ENCODE measurements at regions of chr9 and their contacts with region 1.

Region 1: GRCh38 chr9:121822093-121823085 is 171.0 kb downstream of the DAB2IP start:
- DNase-seq: no peak
- ATAC-seq: no peak
- H3K4me3 ChIP-seq: no peak overlapping the region
- H3K27ac ChIP-seq: no peak overlapping the region
- H3K4me1 ChIP-seq: no peaks in the 10 kb centered on the region
- CTCF ChIP-seq: no peak
- EP300 ChIP-seq: no peak
- POLR2A ChIP-seq: no peak
- RAD21 ChIP-seq: no peak

Region 2: DNA sequence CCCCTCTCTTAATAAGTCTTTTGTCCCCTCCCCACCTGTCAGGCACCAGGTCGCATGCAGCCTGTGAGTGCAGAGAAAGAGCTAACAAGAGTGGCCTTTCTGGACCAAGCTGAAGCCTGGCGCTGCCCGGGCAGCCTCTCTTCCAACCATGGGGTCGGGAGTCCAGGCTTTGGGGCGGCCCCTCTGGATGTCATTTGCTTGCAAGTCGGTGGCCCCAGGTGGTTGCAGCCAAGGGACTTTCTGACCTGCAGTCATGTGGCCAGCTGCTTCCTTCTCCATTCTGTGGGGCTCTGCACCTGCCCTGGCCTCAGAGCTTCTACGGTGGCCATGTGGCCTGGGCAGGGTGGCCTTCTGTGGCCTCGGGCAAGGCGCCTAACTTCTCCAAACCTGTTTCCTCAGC is 11.2 kb before region 1 on chr9:
- CTCF ChIA-PET with region 1: interaction called, 13 read pairs
- POLR2A ChIA-PET with region 1: no interaction called
- DNase-seq: no peak
- ATAC-seq: no peak
- H3K4me3 ChIP-seq: no peak overlapping the region
- H3K27ac ChIP-seq: no peak overlapping the region
- H3K4me1 ChIP-seq: no peaks in the 10 kb centered on the region
- CTCF ChIP-seq: no peak
- EP300 ChIP-seq: no peak
- POLR2A ChIP-seq: no peak
- RAD21 ChIP-seq: no peak

Region 3: GRCh38 chr9:122040561-122041242 is 218.3 kb after region 1 on chr9:
- CTCF ChIA-PET with region 1: no interaction called
- POLR2A ChIA-PET with region 1: no interaction called
- DNase-seq: no peak
- ATAC-seq: no peak
- H3K4me3 ChIP-seq: no peak overlapping the region
- H3K27ac ChIP-seq: no peak overlapping the region
- H3K4me1 ChIP-seq: no peaks in the 10 kb centered on the region
- CTCF ChIP-seq: no peak
- EP300 ChIP-seq: no peak
- POLR2A ChIP-seq: no peak
- RAD21 ChIP-seq: no peak

Measured in A549 (cell line).